ENCODE measurements at regions of chr1 and their contacts with region 1.

Region 1: DNA sequence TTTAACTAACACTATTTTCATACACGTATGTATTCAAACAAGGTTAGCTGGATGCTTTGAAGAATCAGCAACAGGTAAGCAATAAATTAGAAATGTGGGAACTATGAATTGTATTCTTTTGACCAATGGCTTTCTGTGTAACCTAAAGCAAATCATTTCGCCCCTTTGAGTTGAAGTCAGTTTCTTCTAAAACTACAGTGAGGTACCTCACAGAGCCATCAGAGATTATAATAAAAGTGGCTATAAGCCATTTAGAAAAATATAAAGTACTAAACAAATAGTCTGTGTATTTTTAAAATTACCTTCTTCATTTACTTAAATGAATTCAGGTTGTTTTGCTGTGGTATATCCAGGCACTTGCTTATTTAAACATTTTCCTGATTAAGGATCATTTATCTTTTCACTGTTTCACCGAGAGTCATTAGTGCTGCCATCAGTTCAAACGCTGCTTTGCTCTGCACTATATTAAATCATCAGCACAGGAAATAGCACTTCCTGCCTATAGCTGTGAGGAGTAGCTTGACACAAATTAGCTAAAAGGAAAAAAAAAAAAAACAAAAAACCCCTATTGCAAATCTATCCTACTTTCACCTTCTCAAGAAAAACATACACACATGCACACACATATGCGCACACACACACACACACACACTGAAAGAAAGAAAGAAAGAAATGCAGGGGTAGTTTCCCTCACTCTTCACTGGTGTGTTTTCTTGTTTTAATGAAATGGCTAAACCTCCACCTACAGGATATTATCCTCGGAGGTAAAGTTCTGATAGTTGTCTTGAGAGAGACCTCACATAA is 39.8 kb upstream of the C1orf105 start:
- DNase-seq: peak in 7 of 9 donors; percentile 49 to 82 (median 70)
- ATAC-seq: peak; percentile 96
- H3K4me3 ChIP-seq: peak overlapping the region; percentile 32
- H3K4me3 Mint-ChIP-seq: peak overlapping the region; percentile 53 to 82 (median 76)
- H3K27ac ChIP-seq: peak overlapping the region; percentile 76
- H3K27ac Mint-ChIP-seq: peak overlapping the region; percentile 86 to 94 (median 93)
- H3K4me1 ChIP-seq: peaks cover 10 to 18% of the 10 kb centered on the region in 2 donors
- H3K4me1 Mint-ChIP-seq: peaks cover 12 to 57% (median 49%) of the 10 kb centered on the region in 7 donors
- H3K27me3 ChIP-seq: no peaks in the 10 kb centered on the region
- H3K27me3 Mint-ChIP-seq: peaks cover 0 to 3% (median 0%) of the 10 kb centered on the region in 5 donors

Region 2: DNA sequence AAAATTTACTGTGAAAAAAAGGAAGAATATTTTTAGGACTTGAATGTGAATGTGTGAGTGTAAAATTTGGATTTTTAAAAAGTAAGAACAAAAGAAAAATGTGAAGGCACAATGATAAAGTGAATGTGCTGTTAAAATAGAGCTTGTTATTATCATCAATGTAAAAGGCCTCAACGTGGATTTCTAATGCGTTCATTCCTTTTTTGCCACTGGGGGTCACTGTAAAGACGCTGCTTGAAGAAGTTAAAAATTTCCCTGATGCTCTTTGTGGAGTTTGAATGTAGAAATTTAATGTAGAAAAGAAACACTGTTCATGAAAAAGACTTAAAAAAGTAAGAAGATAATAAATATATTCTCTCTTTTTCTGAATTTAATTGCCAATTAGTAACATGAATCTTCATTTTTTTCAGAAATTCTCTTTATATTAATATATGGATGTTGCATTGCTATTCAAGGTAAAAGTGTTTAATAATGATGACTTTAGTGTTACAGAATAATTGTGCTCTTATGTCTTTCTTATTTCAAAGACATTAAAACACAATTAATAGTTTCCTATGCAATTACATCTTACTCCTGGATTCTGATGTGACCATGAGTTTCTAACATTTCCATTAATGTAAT is 377.8 kb before region 1 on chr1:
- CTCF ChIA-PET with region 1: no interaction called
- POLR2A ChIA-PET with region 1: no interaction called
- intact Hi-C with region 1: loop called in 1 of 2 experiments (anchors 5 kb)
- DNase-seq: peak in 7 of 9 donors; percentile 8 to 53 (median 37)
- ATAC-seq: peak; percentile 55
- H3K4me3 ChIP-seq: no peak overlapping the region
- H3K4me3 Mint-ChIP-seq: no peak overlapping the region
- H3K27ac ChIP-seq: no peak overlapping the region
- H3K27ac Mint-ChIP-seq: no peak overlapping the region
- H3K4me1 ChIP-seq: no peaks in the 10 kb centered on the region
- H3K4me1 Mint-ChIP-seq: peaks cover 0 to 8% (median 3%) of the 10 kb centered on the region in 7 donors
- H3K27me3 ChIP-seq: no peaks in the 10 kb centered on the region
- H3K27me3 Mint-ChIP-seq: no peaks in the 10 kb centered on the region

Region 3: DNA sequence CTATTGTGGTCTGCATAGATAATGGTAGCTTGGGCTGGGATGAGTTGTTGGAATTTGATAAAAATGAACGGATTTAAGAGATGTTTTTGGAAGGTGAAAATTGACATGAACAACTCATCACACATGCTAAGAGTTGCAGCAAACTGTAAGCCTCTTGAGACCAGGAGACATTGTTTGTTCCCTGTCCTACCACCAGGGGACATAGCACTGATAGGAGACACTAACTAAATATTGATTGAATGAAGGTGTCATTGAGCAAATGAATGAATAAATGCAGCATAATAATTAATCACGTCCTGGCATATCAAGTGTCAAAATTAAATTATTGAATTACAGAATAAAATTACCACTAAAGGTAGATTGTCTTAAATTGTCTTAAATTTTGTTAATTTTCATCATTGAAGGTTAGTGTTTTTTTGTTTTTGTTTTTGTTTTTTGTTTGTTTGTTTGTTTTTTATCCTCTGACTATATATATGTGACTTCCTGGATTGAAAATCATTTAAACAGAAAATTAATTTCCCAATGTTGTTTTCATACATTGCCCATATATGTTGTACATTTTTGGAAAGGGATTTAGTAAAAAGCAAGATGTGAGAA is 245.5 kb before region 1 on chr1:
- CTCF ChIA-PET with region 1: no interaction called
- POLR2A ChIA-PET with region 1: no interaction called
- intact Hi-C with region 1: loop called in 1 of 2 experiments (anchors 1 kb)
- DNase-seq: peak in 6 of 9 donors; percentile 9 to 37 (median 22)
- ATAC-seq: peak; percentile 48
- H3K4me3 ChIP-seq: no peak overlapping the region
- H3K4me3 Mint-ChIP-seq: no peak overlapping the region
- H3K27ac ChIP-seq: no peak overlapping the region
- H3K27ac Mint-ChIP-seq: no peak overlapping the region
- H3K4me1 ChIP-seq: no peaks in the 10 kb centered on the region
- H3K4me1 Mint-ChIP-seq: peaks cover 0 to 12% (median 0%) of the 10 kb centered on the region in 7 donors
- H3K27me3 ChIP-seq: no peaks in the 10 kb centered on the region
- H3K27me3 Mint-ChIP-seq: no peaks in the 10 kb centered on the region

Region 4: DNA sequence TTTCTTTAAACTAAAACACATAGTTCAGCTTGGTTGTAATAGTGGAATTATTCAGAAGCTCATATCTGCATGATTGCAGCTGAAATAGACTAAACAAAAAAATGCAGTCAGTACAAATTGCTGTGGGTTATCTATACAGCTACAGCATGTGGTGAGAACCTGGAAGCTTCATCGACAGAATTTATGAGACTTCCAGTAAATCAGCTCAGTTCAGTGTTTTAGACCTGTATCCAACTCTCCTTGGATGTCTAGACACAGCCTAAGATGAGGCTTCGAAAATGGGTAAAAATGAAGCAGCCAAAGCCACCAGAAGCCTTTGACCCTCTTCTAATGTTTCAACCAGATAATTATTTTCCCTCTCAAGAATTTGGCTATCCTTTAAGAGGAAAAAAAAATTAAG is 87.2 kb before region 1 on chr1:
- CTCF ChIA-PET with region 1: no interaction called
- POLR2A ChIA-PET with region 1: no interaction called
- intact Hi-C with region 1: loop called in 1 of 2 experiments (anchors 5 kb)
- DNase-seq: no peak
- ATAC-seq: no peak
- H3K4me3 ChIP-seq: no peak overlapping the region
- H3K4me3 Mint-ChIP-seq: no peak overlapping the region
- H3K27ac ChIP-seq: no peak overlapping the region
- H3K27ac Mint-ChIP-seq: no peak overlapping the region
- H3K4me1 ChIP-seq: no peaks in the 10 kb centered on the region
- H3K4me1 Mint-ChIP-seq: peaks cover 0 to 3% (median 0%) of the 10 kb centered on the region in 7 donors
- H3K27me3 ChIP-seq: no peaks in the 10 kb centered on the region
- H3K27me3 Mint-ChIP-seq: no peaks in the 10 kb centered on the region

Region 5: GRCh38 chr1:172357753-172358385 is 22.8 kb before region 1 on chr1:
- CTCF ChIA-PET with region 1: interaction called, 4 read pairs
- POLR2A ChIA-PET with region 1: interaction called, 8 read pairs
- intact Hi-C with region 1: loop called (anchors 1 kb)
- DNase-seq: no peak
- ATAC-seq: peak; percentile 24
- H3K4me3 ChIP-seq: no peak overlapping the region
- H3K4me3 Mint-ChIP-seq: peak overlapping the region; percentile 60 to 76 (median 72)
- H3K27ac ChIP-seq: peak overlapping the region; percentile 58
- H3K27ac Mint-ChIP-seq: peak overlapping the region; percentile 67 to 93 (median 90)
- H3K4me1 ChIP-seq: peaks cover 25 to 40% of the 10 kb centered on the region in 2 donors
- H3K4me1 Mint-ChIP-seq: peaks cover 8 to 56% (median 34%) of the 10 kb centered on the region in 7 donors
- H3K27me3 ChIP-seq: no peaks in the 10 kb centered on the region
- H3K27me3 Mint-ChIP-seq: no peaks in the 10 kb centered on the region

Region 6: GRCh38 chr1:174074757-174075156 is 1694.1 kb after region 1 on chr1:
- CTCF ChIA-PET with region 1: no interaction called
- POLR2A ChIA-PET with region 1: no interaction called
- intact Hi-C with region 1: no loop called
- DNase-seq: peak in 3 of 9 donors; percentile 5 to 11 (median 11)
- ATAC-seq: no peak
- H3K4me3 ChIP-seq: no peak overlapping the region
- H3K4me3 Mint-ChIP-seq: no peak overlapping the region
- H3K27ac ChIP-seq: no peak overlapping the region
- H3K27ac Mint-ChIP-seq: no peak overlapping the region
- H3K4me1 ChIP-seq: no peaks in the 10 kb centered on the region
- H3K4me1 Mint-ChIP-seq: peaks cover 0 to 2% (median 0%) of the 10 kb centered on the region in 7 donors
- H3K27me3 ChIP-seq: peaks cover 0 to 3% of the 10 kb centered on the region in 2 donors
- H3K27me3 Mint-ChIP-seq: peaks cover 0 to 14% (median 0%) of the 10 kb centered on the region in 5 donors